ENCODE measurements at regions of chr1 and their contacts with region 1.

Region 1: DNA sequence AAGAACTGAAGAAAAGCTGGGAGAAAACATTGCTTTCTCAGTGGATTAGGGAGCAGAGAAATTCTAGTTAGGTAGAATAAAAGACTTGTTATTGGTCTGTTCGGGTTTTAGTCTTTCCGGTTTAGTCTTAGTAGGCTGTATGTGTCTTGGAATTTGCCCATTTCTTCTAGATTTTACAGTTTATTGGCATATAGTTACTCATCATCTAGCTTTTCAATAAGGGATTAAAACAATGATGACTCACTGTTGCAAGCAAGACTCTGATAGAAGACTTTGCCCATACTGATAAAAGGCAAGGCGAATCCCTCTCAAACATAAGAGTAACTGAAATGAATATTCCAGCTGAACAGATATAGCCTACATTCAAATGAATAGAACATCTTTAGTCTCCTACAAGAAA is 62.3 kb downstream of the GPR137B start:
- DNase-seq: no peak
- H3K4me3 ChIP-seq: no peak overlapping the region
- H3K27ac ChIP-seq: no peak overlapping the region
- H3K4me1 ChIP-seq: no peaks in the 10 kb centered on the region
- H3K27me3 ChIP-seq: no peaks in the 10 kb centered on the region
- CTCF ChIP-seq: no peak
- EP300 ChIP-seq: no peak
- POLR2A ChIP-seq: no peak

Region 2: GRCh38 chr1:236168716-236169429 is 35.8 kb before region 1 on chr1:
- intact Hi-C with region 1: loop called in 1 of 4 experiments (anchors 1 kb)
- DNase-seq: peak in 2 of 5 donors; percentile 21 to 36
- H3K4me3 ChIP-seq: no peak overlapping the region
- H3K27ac ChIP-seq: no peak overlapping the region
- H3K4me1 ChIP-seq: no peaks in the 10 kb centered on the region
- H3K27me3 ChIP-seq: no peaks in the 10 kb centered on the region
- CTCF ChIP-seq: no peak
- EP300 ChIP-seq: no peak
- POLR2A ChIP-seq: no peak

Region 3: GRCh38 chr1:236433819-236434315 is 229.2 kb after region 1 on chr1:
- intact Hi-C with region 1: no loop called
- DNase-seq: no peak
- H3K4me3 ChIP-seq: no peak overlapping the region
- H3K27ac ChIP-seq: no peak overlapping the region
- H3K4me1 ChIP-seq: no peaks in the 10 kb centered on the region
- H3K27me3 ChIP-seq: no peaks in the 10 kb centered on the region
- CTCF ChIP-seq: no peak
- EP300 ChIP-seq: no peak
- POLR2A ChIP-seq: no peak